ENCODE measurements at regions of chr12 and their contacts with region 1.

Region 1: DNA sequence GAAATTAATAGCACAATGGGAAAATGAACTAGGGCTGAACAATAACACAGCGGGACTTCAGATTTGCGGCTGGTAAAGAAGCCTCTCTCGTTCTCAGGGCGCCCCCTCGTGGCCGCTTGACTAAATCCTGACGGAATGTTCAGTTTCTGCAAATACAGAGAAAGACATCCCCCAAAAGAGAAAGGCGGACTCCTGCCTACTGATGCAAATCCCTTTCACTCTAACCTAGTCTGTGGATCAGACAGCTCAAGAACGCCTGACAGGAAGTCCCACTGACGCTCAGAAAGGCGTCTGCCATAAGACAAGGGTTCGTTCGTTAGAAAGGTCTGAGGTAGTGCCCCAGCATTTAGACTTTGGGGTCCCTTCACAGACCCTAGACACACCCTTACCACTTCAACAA is 2.5 kb downstream of the NUAK1 start:
- DNase-seq: peak; percentile 90
- H3K4me3 ChIP-seq: peak overlapping the region in 2 of 3 experiments; percentile 72 to 73
- H3K27ac ChIP-seq: peak overlapping the region; percentile 77
- H3K4me1 ChIP-seq: peaks cover 67% of the 10 kb centered on the region
- H3K27me3 ChIP-seq: no peaks in the 10 kb centered on the region
- CTCF ChIP-seq: peak; percentile 75 to 76
- POLR2A ChIP-seq: no peak

Region 2: DNA sequence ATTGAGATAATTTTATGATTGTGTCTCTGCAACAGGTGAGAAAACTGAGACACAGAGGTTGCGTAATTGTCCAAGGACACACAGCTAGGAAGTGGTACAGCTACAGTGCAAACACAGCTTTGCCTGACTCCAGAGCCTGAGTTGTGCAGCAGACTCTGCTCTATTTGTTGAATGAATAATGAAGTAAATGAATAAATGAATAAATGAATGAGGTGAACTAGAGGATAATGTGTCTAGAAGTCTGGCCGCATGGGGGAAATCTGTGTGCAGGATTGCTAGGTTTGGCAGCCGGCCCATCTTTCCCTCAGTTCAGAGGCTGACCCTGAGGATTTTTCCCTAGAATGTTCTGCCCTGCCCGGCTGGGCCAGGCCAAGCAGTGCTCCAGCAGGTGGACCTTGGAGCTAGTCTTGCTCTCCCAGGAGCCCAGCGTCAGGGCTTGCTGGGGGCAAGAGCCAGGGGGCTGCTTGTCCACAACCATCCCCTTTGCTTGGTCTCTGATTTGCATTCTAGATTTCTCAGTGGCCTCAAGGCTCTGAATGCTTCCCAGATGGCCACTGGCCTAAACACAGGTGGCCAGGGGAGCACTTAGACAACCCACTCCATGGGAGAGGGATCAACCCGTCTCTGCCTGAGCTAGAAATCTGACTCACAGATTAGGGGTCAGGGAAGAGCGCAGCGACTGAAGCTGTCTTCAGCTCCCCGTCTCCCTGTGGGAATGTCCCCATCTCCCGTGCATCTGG is 580.5 kb before region 1 on chr12:
- CTCF ChIA-PET with region 1: interaction called, 10 read pairs
- POLR2A ChIA-PET with region 1: no interaction called
- dilution Hi-C with region 1: no loop called
- intact Hi-C with region 1: loop called (anchors 2 kb)
- DNase-seq: peak; percentile 63
- H3K4me3 ChIP-seq: no peak overlapping the region
- H3K27ac ChIP-seq: peak overlapping the region; percentile 9
- H3K4me1 ChIP-seq: peaks cover 32% of the 10 kb centered on the region
- H3K27me3 ChIP-seq: no peaks in the 10 kb centered on the region
- CTCF ChIP-seq: no peak
- POLR2A ChIP-seq: no peak

Region 3: DNA sequence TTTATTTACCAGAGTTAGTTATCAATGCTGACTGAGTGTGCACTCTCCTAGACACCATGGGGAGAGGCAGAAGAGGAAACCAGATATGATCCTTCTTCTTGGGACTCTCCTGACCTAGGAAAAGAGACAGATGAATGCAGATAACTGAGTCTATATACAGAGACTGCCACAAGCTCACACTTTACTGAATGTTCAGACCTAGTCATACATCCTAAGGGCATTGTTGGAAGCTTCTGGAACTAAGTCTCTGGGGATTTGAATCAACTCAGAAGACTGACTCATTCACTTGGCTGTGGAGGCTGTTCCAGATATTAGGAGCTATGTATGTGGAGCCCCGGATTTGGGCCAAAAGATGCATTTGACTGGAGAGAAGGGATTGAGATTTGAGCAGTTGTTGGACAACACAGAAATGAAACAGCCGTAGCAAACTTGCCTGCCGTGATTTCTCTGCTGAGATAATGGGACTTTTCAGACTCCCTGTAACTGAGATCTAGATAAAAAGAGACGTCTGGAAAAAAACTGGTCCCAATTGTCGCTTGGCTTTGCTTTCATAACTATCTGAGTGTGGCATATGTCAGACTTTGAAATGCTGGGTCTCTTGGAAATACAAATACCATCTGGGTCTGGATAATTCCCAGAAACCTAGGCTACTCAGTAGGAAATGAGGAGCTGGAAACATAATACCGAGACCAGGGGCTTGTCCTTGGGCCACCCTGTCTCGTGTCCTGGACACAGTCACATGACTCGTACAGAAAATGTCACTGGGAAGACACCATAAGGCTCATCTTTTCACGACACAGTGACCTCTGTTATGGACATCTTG is 394.3 kb before region 1 on chr12:
- CTCF ChIA-PET with region 1: interaction called, 4 read pairs
- POLR2A ChIA-PET with region 1: no interaction called
- dilution Hi-C with region 1: no loop called
- intact Hi-C with region 1: loop called (anchors 1 kb)
- DNase-seq: peak; percentile 47
- H3K4me3 ChIP-seq: no peak overlapping the region
- H3K27ac ChIP-seq: no peak overlapping the region
- H3K4me1 ChIP-seq: peaks cover 32% of the 10 kb centered on the region
- H3K27me3 ChIP-seq: peaks cover 50 to 60% of the 10 kb centered on the region in 2 experiments
- CTCF ChIP-seq: no peak
- POLR2A ChIP-seq: no peak

Region 4: DNA sequence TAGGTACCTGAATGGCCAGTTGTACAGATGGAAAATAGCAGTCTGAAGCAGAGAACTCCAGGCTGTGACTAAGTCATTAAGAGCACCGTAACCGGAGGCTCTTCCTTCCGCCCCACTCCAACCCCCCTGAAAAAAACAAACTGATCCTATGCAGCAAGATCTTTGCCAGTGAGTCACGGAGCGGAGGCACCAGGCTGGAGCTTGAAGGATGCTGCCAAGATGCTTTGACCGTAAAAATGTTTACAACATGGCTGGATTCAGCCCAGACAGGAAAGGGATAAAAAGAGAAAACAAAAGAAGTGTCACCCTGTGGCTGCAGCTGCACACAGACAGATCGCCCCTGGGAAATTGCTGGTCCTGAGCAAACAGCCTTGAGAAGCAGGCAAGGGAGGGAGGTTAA is 202.0 kb before region 1 on chr12:
- CTCF ChIA-PET with region 1: interaction called, 6 read pairs
- POLR2A ChIA-PET with region 1: interaction called, 3 read pairs
- dilution Hi-C with region 1: no loop called
- intact Hi-C with region 1: loop called (anchors 1 kb)
- DNase-seq: peak; percentile 96
- H3K4me3 ChIP-seq: no peak overlapping the region
- H3K27ac ChIP-seq: peak overlapping the region; percentile 90
- H3K4me1 ChIP-seq: peaks cover 35% of the 10 kb centered on the region
- H3K27me3 ChIP-seq: no peaks in the 10 kb centered on the region
- CTCF ChIP-seq: no peak
- POLR2A ChIP-seq: no peak

Region 5: GRCh38 chr12:106066051-106066705 is 70.1 kb before region 1 on chr12:
- CTCF ChIA-PET with region 1: interaction called, 14 read pairs
- POLR2A ChIA-PET with region 1: no interaction called
- dilution Hi-C with region 1: no loop called
- intact Hi-C with region 1: loop called (anchors 1 kb)
- DNase-seq: peak; percentile 59
- H3K4me3 ChIP-seq: no peak overlapping the region
- H3K27ac ChIP-seq: peak overlapping the region; percentile 36
- H3K4me1 ChIP-seq: peaks cover 47% of the 10 kb centered on the region
- H3K27me3 ChIP-seq: no peaks in the 10 kb centered on the region
- CTCF ChIP-seq: no peak
- POLR2A ChIP-seq: no peak

Region 6: GRCh38 chr12:106108185-106108835 is 28.0 kb before region 1 on chr12:
- CTCF ChIA-PET with region 1: interaction called, 26 read pairs
- POLR2A ChIA-PET with region 1: interaction called, 3 read pairs
- dilution Hi-C with region 1: no loop called
- intact Hi-C with region 1: no loop called
- DNase-seq: no peak
- H3K4me3 ChIP-seq: no peak overlapping the region
- H3K27ac ChIP-seq: no peak overlapping the region
- H3K4me1 ChIP-seq: peaks cover 34% of the 10 kb centered on the region
- H3K27me3 ChIP-seq: no peaks in the 10 kb centered on the region
- CTCF ChIP-seq: no peak
- POLR2A ChIP-seq: no peak

Measured in endothelial cell of umbilical vein (primary cell).